T-cell (primary cell): ENCODE measurements at regions of chr10 and their contacts with region 1.

Region 1: DNA sequence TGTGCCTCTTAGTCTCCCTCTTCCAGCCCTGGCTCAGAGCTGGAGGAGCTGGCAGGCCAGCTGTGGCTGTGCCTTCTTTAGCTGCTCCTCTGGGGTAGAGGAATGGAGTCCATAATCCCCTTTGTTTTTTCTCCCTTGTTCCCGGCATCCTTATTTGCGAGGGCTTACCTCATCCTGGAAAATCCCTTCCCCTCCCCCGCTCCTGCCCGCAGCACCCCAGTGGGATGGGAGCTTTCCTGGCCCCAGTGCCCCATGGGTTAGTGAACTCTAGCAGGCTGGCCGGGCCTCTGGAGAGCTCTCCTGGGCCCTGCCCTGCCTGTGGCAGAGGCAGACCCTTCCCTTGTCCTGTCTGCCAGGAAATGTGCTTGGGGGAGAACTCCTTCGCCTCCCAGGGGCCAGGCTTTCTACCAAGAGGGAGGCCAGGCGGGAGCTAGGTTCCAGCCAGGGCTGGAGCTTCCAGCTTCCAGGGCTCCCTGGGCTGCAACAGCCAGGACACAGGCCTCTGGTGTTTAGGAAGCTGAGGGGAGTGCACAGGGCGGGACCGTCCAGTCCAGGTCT is 16.5 kb upstream of the TRIM8 start:
- DNase-seq: no peak
- ATAC-seq: no peak
- H3K4me3 ChIP-seq: no peak overlapping the region
- H3K4me3 Mint-ChIP-seq: no peak overlapping the region
- H3K27ac ChIP-seq: no peak overlapping the region
- H3K27ac Mint-ChIP-seq: no peak overlapping the region
- H3K4me1 ChIP-seq: peaks cover 5 to 10% of the 10 kb centered on the region in 2 experiments
- H3K4me1 Mint-ChIP-seq: peaks cover 7 to 13% (median 12%) of the 10 kb centered on the region in 3 donors
- H3K27me3 ChIP-seq: no peaks in the 10 kb centered on the region
- H3K27me3 Mint-ChIP-seq: no peaks in the 10 kb centered on the region

Region 2: DNA sequence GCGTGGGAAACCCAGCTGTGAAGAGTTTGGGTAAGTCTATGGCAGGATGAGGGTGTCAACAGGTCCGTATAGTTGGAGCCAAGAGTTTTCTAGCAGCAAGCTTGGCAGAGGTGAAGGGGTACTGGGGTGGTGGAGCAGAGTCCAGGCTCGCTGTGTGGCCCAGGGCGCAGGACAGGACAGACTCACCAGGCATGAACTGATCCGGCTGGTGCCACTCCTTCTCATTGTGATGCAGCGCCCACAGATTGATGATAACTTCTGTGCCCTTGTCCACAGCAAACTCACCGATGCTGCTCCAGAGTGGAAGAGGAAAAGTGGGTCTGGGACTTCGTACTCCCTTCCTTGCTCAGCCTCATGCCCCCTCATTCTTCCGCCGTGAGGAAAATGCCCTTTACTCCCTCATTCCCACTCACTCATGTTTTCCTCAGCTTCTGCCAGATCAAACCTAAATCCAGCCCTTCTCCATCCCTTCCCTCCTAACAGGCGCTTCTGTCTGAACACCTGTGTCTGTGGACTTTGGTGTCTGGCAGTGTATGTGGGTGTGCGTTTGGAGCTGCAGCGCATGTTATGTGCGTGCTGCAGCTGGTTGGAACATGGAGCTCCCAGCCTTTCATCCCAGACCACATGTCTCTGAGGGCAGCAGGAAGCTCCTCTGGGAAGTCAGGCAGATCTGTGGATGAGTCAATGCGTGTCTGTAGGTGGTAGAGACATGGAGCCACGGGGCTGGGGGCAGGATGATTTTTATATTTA is 203.7 kb after region 1 on chr10:
- CTCF ChIA-PET with region 1: no interaction called
- POLR2A ChIA-PET with region 1: no interaction called
- DNase-seq: no peak
- ATAC-seq: no peak
- H3K4me3 ChIP-seq: no peak overlapping the region
- H3K4me3 Mint-ChIP-seq: no peak overlapping the region
- H3K27ac ChIP-seq: no peak overlapping the region
- H3K27ac Mint-ChIP-seq: no peak overlapping the region
- H3K4me1 ChIP-seq: peaks cover 0 to 5% of the 10 kb centered on the region in 2 experiments
- H3K4me1 Mint-ChIP-seq: no peaks in the 10 kb centered on the region
- H3K27me3 ChIP-seq: peaks cover 0 to 31% of the 10 kb centered on the region in 2 experiments
- H3K27me3 Mint-ChIP-seq: no peaks in the 10 kb centered on the region

Region 3: DNA sequence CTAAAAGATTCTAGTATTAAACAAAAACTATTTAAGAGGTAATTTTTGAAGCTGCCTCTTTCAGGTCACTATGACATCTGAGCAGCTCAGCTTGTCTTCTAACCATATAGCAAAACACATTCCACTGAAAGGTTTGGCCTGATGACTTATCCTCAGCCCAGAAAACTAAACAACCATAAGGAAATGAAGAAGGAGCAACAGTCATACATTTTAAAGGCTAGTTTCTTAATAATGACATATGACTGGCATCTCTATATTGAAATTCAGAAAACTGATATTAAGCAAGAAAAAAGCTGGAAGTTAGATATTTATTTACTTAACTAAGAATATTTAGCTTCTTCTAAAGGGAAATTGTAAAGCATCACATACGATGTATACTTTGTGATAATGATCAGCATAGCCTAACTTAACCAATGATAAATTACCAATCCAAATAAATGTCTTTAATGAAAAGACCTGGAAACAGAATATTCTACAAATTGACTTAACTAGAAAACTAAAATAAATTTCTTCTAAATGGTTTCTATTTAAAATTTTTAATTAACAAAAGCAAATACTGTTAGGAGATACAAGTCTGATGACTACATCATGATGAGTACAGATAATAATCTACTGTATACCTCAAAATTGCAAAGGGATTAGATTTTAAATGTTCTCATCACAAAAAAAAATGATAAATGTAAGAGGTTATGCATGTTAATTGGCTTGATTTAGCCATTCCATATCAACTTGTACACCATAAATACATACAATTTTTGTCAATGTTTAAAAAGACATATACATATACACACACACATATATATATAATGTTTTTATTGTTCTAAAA is 540.9 kb after region 1 on chr10:
- CTCF ChIA-PET with region 1: no interaction called
- POLR2A ChIA-PET with region 1: interaction called in 1 of 2 experiments, 19 read pairs
- DNase-seq: no peak
- ATAC-seq: no peak
- H3K4me3 ChIP-seq: no peak overlapping the region
- H3K4me3 Mint-ChIP-seq: no peak overlapping the region
- H3K27ac ChIP-seq: no peak overlapping the region
- H3K27ac Mint-ChIP-seq: no peak overlapping the region
- H3K4me1 ChIP-seq: no peaks in the 10 kb centered on the region
- H3K4me1 Mint-ChIP-seq: peaks cover 0 to 2% (median 2%) of the 10 kb centered on the region in 3 donors
- H3K27me3 ChIP-seq: no peaks in the 10 kb centered on the region
- H3K27me3 Mint-ChIP-seq: no peaks in the 10 kb centered on the region